ENCODE measurements at regions of chr15 and their contacts with region 1.

Region 1: GRCh38 chr15:98658831-98659699 is 10.7 kb downstream of the IGF1R start:
- DNase-seq: peak in 1 of 2 donors; percentile 55
- H3K4me3 ChIP-seq: no peak overlapping the region
- H3K27ac ChIP-seq: peak overlapping the region; percentile 43 to 96
- H3K4me1 ChIP-seq: peaks cover 0 to 100% (median 79%) of the 10 kb centered on the region in 4 donors
- H3K27me3 ChIP-seq: no peaks in the 10 kb centered on the region
- CTCF ChIP-seq: peak; percentile 75 to 79

Region 2: GRCh38 chr15:98347001-98347400 is 312.1 kb before region 1 on chr15:
- intact Hi-C with region 1: no loop called
- DNase-seq: no peak
- H3K4me3 ChIP-seq: no peak overlapping the region
- H3K27ac ChIP-seq: no peak overlapping the region
- H3K4me1 ChIP-seq: no peaks in the 10 kb centered on the region
- H3K27me3 ChIP-seq: no peaks in the 10 kb centered on the region
- CTCF ChIP-seq: no peak

Region 3: GRCh38 chr15:98720577-98721565 is 61.8 kb after region 1 on chr15:
- intact Hi-C with region 1: loop called (anchors 5 kb)
- DNase-seq: no peak
- H3K4me3 ChIP-seq: no peak overlapping the region
- H3K27ac ChIP-seq: peak overlapping the region in 1 of 2 donors; percentile 60
- H3K4me1 ChIP-seq: peaks cover 2 to 100% (median 73%) of the 10 kb centered on the region in 4 donors
- H3K27me3 ChIP-seq: no peaks in the 10 kb centered on the region
- CTCF ChIP-seq: no peak

Region 4: DNA sequence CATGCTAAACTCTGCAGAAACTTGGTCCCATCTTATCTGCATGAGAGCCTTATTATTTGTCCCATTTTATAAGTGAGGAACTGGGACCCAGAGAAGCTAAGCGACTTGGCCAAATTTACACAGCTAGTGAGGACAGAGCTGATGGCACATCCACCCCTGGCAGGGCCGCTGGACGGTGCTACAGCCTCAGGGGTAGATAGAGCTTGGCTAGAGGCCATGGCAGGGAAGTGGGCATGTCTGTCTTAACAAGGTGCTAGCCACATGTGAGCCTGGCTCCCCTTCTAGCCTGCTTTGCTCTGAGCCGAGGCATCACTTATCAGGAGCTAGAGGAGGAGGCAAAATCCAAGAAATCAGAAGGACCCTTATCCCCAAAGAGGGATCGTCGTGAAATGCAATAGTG is 409.1 kb after region 1 on chr15:
- intact Hi-C with region 1: loop called (anchors 10 kb)
- DNase-seq: peak in 1 of 2 donors; percentile 28
- H3K4me3 ChIP-seq: no peak overlapping the region
- H3K27ac ChIP-seq: no peak overlapping the region
- H3K4me1 ChIP-seq: no peaks in the 10 kb centered on the region
- H3K27me3 ChIP-seq: no peaks in the 10 kb centered on the region
- CTCF ChIP-seq: no peak

Measured in tibial artery (tissue), 4 donors.